ENCODE measurements at regions of chr4 and their contacts with region 1.

Region 1: DNA sequence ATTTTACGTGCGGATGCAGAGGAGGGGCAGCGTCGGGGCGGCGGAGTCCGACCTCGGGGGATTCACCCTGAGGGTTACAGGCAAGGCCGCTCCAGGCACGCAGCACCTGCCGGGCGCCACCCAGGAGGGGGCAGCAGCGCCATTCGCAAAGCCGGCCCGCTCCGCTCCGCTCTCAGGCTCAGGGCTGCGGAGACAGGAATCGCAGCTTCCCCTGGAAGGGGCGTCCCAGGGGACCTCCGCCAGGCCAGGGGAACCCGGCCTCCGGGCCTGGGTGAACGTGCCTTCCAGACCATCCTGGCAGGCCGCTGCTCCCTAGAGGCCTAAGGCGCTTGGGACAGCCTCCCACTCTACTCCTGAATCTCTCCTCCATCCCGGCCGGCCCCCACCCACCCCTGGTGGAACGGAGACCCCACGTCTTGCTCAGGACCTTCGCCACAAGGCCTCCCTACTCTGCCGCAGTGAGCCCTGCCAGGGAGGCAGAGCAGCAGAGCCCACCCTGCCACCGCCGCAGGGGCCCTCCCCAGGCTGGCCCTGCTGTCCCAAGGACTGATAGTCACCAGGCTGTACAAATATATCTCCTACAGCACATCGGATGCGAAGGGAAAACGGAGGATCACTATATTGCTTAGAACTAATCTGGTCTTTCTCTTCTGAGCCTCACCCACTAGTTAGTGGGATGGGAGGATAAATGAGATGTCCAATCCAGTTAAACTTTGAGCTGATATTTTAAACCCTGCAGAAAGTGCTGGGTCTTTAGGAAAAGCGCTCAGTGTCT is 115.0 kb downstream of the SMIM20 start:
- DNase-seq: peak; percentile 87
- CTCF ChIP-seq: peak; percentile 97

Region 2: DNA sequence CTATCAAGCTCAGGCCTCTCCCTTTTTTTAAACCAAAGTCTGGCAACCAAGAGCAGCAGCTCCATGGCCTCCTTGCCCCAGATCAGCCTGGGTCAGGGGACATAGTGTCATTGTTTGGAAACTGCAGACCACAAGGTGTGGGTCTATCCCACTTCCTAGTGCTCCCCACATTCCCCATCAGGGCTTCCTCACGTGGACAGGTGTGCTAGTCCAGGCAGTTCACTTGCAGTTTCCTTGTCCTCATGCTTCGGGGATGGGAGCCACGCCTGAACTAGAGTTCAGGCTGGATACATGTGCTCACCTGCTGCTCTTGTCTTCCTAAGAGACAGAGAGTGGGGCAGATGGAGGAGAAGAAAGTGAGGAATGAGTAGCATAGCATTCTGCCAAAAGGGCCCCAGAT is 351.8 kb before region 1 on chr4:
- CTCF ChIA-PET with region 1: no interaction called
- POLR2A ChIA-PET with region 1: no interaction called
- DNase-seq: no peak
- CTCF ChIP-seq: no peak

Region 3: DNA sequence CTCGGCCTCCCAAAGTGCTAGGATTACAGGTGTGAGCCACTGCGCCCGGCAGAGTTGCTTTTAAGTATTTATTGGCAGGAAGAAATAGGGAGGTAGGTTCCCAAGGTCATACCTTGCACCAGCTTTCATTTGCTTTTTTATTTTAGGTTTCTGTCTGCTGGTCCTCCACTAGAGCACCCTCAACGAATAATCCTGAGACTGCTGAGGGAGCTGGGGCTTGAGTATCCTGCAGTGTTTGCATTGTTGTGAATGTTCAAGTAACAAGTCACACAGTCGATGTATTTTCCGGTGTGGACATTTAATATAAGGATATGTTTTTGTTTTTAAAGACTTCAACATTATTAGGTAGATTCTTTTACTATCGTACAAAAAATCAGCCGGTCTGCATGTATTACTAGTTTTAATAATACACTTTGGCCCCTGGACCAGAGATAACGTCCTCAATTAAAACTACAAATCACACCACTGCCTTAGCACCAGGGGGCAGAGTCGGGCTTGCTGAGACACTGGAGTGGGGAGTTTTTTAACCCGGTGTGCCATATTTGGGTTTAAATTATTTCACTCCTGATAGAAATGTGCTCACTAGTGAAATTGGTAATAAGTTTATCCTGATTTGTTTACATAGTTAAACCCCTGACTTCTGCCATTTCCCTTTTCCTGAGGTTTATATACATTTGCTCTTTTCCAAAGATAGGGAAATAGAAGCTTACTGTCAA is 103.3 kb before region 1 on chr4:
- CTCF ChIA-PET with region 1: no interaction called
- POLR2A ChIA-PET with region 1: no interaction called
- DNase-seq: peak; percentile 58
- CTCF ChIP-seq: peak; percentile 51

Region 4: DNA sequence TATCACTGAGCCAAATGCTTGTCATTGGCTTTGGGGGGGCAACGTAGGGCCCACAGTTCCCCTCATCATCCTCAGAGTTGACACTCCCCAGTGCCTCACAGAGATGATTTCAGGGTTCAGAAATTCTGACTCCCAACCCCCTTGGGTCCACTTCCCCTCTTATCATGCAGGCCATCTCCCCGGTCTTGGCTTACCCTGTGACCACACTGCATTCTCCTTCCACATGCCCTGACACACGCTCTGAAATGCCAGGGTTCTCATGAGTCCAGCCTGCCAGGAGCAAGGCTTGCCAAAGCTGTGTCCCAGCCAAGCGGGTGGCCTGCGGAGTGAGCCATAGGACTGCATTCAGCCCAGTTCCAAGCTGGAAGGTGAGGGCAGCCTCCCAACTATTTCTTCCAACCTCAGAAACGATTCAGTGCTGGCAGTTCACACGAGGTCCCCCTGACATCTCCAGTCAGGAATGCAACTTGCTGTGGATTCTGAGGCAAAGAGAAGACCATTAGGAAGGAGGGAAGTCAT is 13.8 kb before region 1 on chr4:
- CTCF ChIA-PET with region 1: interaction called, 12 read pairs
- POLR2A ChIA-PET with region 1: no interaction called
- DNase-seq: no peak
- CTCF ChIP-seq: no peak

Region 5: DNA sequence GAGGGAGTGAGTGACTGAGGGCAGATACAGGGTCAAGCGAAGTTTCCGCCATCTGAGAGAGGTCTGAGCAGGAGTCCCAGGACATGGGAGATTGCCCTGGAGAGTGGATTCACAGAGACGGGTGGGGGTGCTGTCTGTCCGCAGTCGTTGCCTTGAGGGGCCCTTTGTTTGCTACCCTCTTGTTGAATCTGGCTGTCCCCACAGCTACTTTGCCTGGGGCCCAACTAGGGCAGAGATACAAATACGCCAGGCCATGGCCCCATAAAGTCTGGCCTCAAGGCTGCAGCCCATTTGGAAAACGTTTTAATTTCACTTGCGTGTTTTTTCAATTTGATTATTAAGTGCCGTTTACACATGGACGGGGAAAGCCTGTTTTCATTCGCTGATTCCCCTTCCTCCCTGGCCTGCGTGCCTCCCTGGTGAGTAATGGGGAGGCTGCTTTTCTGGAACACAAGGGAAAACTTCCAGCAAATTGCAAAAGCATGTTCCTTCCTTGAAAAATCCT is 19.4 kb after region 1 on chr4:
- CTCF ChIA-PET with region 1: interaction called, 11 read pairs
- POLR2A ChIA-PET with region 1: no interaction called
- DNase-seq: no peak
- CTCF ChIP-seq: no peak

Region 6: DNA sequence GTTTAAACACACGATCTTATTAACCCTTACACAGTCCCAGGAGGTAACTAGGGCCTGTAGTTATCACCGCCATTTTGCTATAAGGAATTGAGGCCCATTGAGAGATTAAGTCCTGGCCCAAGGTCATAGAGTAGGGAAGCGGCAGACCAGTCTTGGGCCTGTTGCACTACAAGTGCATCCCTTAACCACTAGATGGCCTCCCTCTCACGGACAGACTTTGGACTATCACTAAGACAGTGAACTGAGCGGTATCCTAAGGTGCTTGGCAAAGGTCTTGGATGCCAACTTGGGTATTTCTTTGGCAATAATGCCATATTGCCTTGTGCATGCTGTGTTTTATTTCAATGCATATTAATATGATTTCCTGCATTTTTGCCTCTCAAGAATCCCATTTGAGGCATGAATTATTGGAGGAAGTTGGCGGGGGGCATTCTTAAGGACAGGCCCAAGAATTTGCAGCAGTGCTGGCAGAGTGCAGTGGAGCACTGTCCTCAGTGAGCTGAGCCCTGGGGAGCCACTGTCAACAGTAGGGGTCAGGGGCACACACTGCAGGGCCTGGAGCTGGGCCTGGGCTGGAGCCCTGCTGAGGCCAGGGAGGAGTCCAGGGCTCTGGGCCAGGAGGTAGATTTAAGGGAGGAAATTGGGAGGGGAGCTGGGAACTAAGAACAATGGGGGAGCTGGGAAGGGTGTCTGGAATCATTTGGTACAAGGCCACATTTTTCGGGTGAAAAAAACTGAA is 32.4 kb after region 1 on chr4:
- CTCF ChIA-PET with region 1: interaction called, 10 read pairs
- POLR2A ChIA-PET with region 1: no interaction called
- DNase-seq: peak; percentile 63
- CTCF ChIP-seq: peak; percentile 62

Region 7: GRCh38 chr4:26362745-26363439 is 333.9 kb after region 1 on chr4:
- CTCF ChIA-PET with region 1: no interaction called
- POLR2A ChIA-PET with region 1: no interaction called
- DNase-seq: no peak
- CTCF ChIP-seq: no peak

Region 8: DNA sequence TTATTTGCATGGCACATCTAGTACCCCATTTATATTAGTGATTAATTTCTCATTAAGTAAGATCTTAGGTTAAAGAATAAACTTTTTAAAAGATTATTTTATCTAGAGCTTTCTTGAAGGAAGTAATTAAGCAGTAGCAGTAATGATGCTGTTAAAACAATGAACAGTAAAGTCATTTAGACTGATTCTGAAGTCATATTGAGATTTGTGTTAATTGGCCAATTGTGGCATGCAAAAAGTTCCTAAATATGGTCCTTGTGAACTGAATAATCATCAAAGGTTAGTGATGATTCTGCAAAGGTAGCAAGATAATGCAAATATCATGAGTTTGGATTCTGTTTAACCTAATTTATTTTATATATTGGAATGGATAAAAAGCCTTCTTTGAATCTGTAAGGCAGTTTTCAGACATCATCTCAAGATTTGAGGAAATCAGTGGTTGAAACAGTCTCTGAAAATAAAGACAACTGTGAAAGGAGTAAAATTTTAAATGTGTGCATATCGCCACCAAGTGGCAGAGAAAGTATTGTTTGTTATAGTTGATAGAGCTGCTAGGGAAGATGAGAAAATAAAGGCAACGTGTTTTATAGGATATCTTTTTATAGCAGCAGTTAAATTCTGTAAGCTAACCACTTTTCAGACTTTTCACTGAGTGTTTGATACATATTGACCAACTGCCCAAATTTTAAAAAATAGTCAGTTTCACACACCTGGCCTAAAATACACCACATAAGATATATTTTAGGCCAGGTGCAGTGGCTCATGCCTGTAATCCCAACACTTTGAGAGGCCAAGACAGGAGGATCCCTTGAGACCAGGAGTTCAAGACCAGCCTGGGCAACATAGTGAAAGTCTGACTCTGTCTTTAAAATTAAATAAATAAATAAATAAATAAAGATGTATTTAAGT is 381.7 kb after region 1 on chr4:
- CTCF ChIA-PET with region 1: interaction called, 44 read pairs
- POLR2A ChIA-PET with region 1: no interaction called
- DNase-seq: peak; percentile 55
- CTCF ChIP-seq: peak; percentile 53